Activated B cell treated with CpG ODN at 0.5 μM for 24 hours (primary cell): ENCODE measurements at regions of chr14 and their contacts with region 1.

Region 1: GRCh38 chr14:55354500-55354899 is 57.1 kb downstream of the ATG14 start:
- DNase-seq: no peak
- ATAC-seq: peak; percentile 84
- H3K4me3 Mint-ChIP-seq: no peak overlapping the region
- H3K27ac Mint-ChIP-seq: no peak overlapping the region
- H3K4me1 Mint-ChIP-seq: peaks cover 10% of the 10 kb centered on the region
- H3K27me3 Mint-ChIP-seq: no peaks in the 10 kb centered on the region
- CTCF ChIP-seq: no peak

Region 2: GRCh38 chr14:55094321-55095157 is 260.0 kb before region 1 on chr14:
- CTCF ChIA-PET with region 1: interaction called, 5 read pairs
- POLR2A ChIA-PET with region 1: no interaction called
- intact Hi-C with region 1: loop called (anchors 1 kb)
- DNase-seq: no peak
- ATAC-seq: no peak
- H3K4me3 Mint-ChIP-seq: no peak overlapping the region
- H3K27ac Mint-ChIP-seq: no peak overlapping the region
- H3K4me1 Mint-ChIP-seq: peaks cover 28% of the 10 kb centered on the region
- H3K27me3 Mint-ChIP-seq: no peaks in the 10 kb centered on the region
- CTCF ChIP-seq: no peak

Region 3: DNA sequence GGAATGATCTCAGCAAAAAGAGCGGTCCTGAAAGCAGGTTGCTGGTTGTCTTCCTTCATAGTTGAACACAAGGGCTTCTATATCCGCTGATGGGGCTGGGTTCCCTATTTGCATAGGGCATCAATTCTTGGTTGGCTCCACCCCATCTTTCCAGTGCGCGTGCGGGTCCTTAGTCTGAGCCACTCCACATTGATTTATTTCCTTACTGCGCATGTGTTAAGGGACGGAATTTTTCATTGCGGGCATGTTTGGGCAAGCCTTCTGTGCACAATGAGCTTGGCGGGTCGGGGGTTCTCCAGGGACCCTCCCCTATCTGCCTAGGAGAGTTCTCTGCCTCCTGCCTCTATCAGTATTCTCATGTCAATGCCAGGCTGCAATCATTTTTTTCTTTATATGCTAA is 141.9 kb before region 1 on chr14:
- CTCF ChIA-PET with region 1: interaction called, 16 read pairs
- POLR2A ChIA-PET with region 1: interaction called, 3 read pairs
- intact Hi-C with region 1: loop called (anchors 1 kb)
- DNase-seq: no peak
- ATAC-seq: no peak
- H3K4me3 Mint-ChIP-seq: no peak overlapping the region
- H3K27ac Mint-ChIP-seq: no peak overlapping the region
- H3K4me1 Mint-ChIP-seq: peaks cover 2% of the 10 kb centered on the region
- H3K27me3 Mint-ChIP-seq: no peaks in the 10 kb centered on the region
- CTCF ChIP-seq: no peak

Region 4: GRCh38 chr14:55245657-55246268 is 108.7 kb before region 1 on chr14:
- CTCF ChIA-PET with region 1: interaction called, 13 read pairs
- POLR2A ChIA-PET with region 1: interaction called, 4 read pairs
- intact Hi-C with region 1: loop called (anchors 1 kb)
- DNase-seq: no peak
- ATAC-seq: no peak
- H3K4me3 Mint-ChIP-seq: no peak overlapping the region
- H3K27ac Mint-ChIP-seq: no peak overlapping the region
- H3K4me1 Mint-ChIP-seq: no peaks in the 10 kb centered on the region
- H3K27me3 Mint-ChIP-seq: peaks cover 23% of the 10 kb centered on the region
- CTCF ChIP-seq: no peak

Region 5: GRCh38 chr14:55277972-55278740 is 76.3 kb before region 1 on chr14:
- CTCF ChIA-PET with region 1: interaction called, 50 read pairs
- POLR2A ChIA-PET with region 1: no interaction called
- intact Hi-C with region 1: no loop called
- DNase-seq: no peak
- ATAC-seq: peak; percentile 86
- H3K4me3 Mint-ChIP-seq: peak overlapping the region; percentile 67
- H3K27ac Mint-ChIP-seq: peak overlapping the region; percentile 77
- H3K4me1 Mint-ChIP-seq: peaks cover 58% of the 10 kb centered on the region
- H3K27me3 Mint-ChIP-seq: no peaks in the 10 kb centered on the region
- CTCF ChIP-seq: no peak

Region 6: GRCh38 chr14:55430024-55430690 is 75.7 kb after region 1 on chr14:
- CTCF ChIA-PET with region 1: no interaction called
- POLR2A ChIA-PET with region 1: no interaction called
- intact Hi-C with region 1: no loop called
- DNase-seq: no peak
- ATAC-seq: peak; percentile 61
- H3K4me3 Mint-ChIP-seq: no peak overlapping the region
- H3K27ac Mint-ChIP-seq: no peak overlapping the region
- H3K4me1 Mint-ChIP-seq: peaks cover 7% of the 10 kb centered on the region
- H3K27me3 Mint-ChIP-seq: no peaks in the 10 kb centered on the region
- CTCF ChIP-seq: no peak

Region 7: DNA sequence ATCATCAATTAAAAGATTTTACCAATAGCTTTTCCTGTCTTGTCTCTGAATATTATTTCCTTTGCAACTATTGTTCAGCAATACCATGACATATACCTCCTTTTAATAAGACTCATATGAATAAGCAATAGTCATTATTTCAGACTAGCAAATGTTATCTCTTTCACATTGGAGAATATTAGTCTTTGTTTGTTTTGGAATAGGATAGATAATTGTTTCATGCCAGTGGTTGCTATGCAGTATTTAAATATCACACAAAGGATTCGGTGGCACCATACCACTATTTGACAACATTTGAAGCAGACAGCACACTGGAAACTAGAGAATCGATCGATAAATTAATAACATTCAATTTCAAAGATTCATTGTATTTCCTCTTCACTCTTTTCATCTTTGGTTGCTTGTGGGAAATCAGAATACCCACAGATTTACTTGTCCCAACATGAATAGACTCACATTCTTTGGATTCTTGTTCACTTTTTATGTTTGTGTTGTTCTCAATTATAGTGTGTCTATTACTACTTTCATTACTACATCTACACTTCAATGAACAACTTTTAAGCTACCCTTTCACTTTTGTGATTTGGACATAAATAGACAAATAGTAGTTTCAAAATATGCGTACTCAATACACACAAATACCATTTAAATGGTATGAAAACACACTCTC is 128.6 kb after region 1 on chr14:
- CTCF ChIA-PET with region 1: no interaction called
- POLR2A ChIA-PET with region 1: no interaction called
- intact Hi-C with region 1: no loop called
- DNase-seq: no peak
- ATAC-seq: no peak
- H3K4me3 Mint-ChIP-seq: no peak overlapping the region
- H3K27ac Mint-ChIP-seq: no peak overlapping the region
- H3K4me1 Mint-ChIP-seq: no peaks in the 10 kb centered on the region
- H3K27me3 Mint-ChIP-seq: peaks cover 3% of the 10 kb centered on the region
- CTCF ChIP-seq: no peak

Region 8: DNA sequence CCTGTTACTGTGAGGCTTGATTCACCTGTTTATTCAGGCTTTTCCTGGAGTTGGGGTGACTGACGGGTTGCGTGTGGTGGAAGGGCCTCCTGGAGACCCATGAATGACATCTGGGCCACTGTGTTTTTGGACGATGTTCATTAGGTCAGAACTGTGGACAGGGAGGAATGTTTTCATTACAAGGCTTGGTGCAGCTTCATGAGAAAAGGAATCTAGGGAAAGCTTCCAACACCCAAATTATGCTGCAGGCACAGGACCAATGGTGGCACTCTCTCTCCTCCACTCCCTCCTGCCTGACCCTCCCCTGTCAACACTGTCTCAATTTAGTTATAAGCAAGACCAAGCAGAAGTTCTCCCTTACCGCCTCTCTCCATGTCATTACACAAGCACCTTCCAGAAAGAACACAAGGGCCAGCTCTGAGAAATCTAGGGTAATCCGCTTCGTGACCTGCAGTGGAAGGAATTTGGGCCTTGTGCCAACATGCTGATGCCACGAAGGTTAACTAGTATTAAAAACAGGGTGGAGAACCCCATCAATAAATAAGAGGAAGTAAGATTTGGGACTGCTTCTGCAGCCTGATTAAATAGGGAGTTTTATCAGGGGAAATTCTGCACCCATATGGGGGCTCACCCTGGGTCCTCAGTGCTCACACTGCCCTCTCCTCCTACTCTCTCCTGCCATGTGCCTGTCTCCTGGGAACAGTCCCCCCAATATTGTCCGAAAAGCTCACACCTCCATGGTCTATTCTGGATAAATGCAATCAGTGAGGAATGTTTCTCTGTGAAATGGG is 425.9 kb after region 1 on chr14:
- CTCF ChIA-PET with region 1: no interaction called
- POLR2A ChIA-PET with region 1: no interaction called
- intact Hi-C with region 1: no loop called
- DNase-seq: no peak
- ATAC-seq: no peak
- H3K4me3 Mint-ChIP-seq: no peak overlapping the region
- H3K27ac Mint-ChIP-seq: no peak overlapping the region
- H3K4me1 Mint-ChIP-seq: no peaks in the 10 kb centered on the region
- H3K27me3 Mint-ChIP-seq: no peaks in the 10 kb centered on the region
- CTCF ChIP-seq: no peak